Naive thymus-derived CD4-positive, alpha-beta T cell (primary cell): ENCODE measurements at regions of chr11 and their contacts with region 1.

Region 1: GRCh38 chr11:86447763-86448480 is 73.2 kb downstream of the CCDC81 start:
- DNase-seq: peak in 1 of 9 donors; percentile 46
- ATAC-seq: no peak
- H3K4me3 ChIP-seq: no peak overlapping the region
- H3K4me3 Mint-ChIP-seq: peak overlapping the region in 1 of 10 donors; percentile 43
- H3K27ac ChIP-seq: no peak overlapping the region
- H3K27ac Mint-ChIP-seq: peak overlapping the region in 1 of 9 donors; percentile 74
- H3K4me1 ChIP-seq: peaks cover 0 to 2% of the 10 kb centered on the region in 2 donors
- H3K4me1 Mint-ChIP-seq: peaks cover 0 to 16% (median 0%) of the 10 kb centered on the region in 7 donors
- H3K27me3 ChIP-seq: no peaks in the 10 kb centered on the region
- H3K27me3 Mint-ChIP-seq: no peaks in the 10 kb centered on the region

Region 2: DNA sequence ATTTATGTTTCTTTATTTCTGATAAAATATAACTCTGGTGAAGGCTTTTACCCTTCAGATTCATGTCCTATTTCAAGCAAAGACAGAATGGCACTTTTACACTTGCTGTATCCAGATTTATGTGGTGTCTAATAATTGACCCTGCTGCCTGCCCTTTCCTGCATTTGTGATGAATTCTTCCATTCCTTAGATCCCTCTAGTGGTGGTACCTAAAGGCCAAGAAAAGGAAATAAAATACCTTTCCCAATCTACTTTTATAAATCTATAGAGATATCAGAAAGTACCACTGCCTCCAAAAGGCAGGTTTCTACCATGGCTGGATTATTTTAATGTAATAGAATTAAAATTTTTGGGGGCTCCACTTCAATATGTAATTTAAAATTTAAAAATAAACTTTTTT is 39.1 kb before region 1 on chr11:
- CTCF ChIA-PET with region 1: no interaction called
- POLR2A ChIA-PET with region 1: no interaction called
- intact Hi-C with region 1: no loop called
- DNase-seq: no peak
- ATAC-seq: no peak
- H3K4me3 ChIP-seq: no peak overlapping the region
- H3K4me3 Mint-ChIP-seq: no peak overlapping the region
- H3K27ac ChIP-seq: no peak overlapping the region
- H3K27ac Mint-ChIP-seq: no peak overlapping the region
- H3K4me1 ChIP-seq: no peaks in the 10 kb centered on the region
- H3K4me1 Mint-ChIP-seq: no peaks in the 10 kb centered on the region
- H3K27me3 ChIP-seq: no peaks in the 10 kb centered on the region
- H3K27me3 Mint-ChIP-seq: no peaks in the 10 kb centered on the region

Region 3: GRCh38 chr11:86592659-86593451 is 144.9 kb after region 1 on chr11:
- CTCF ChIA-PET with region 1: no interaction called
- POLR2A ChIA-PET with region 1: no interaction called
- intact Hi-C with region 1: loop called in 1 of 2 experiments (anchors 1 kb)
- DNase-seq: peak in 7 of 9 donors; percentile 25 to 77 (median 37)
- ATAC-seq: peak; percentile 78
- H3K4me3 ChIP-seq: no peak overlapping the region
- H3K4me3 Mint-ChIP-seq: peak overlapping the region in 3 of 10 donors; percentile 10 to 35 (median 23)
- H3K27ac ChIP-seq: no peak overlapping the region
- H3K27ac Mint-ChIP-seq: peak overlapping the region in 2 of 9 donors; percentile 32 to 58
- H3K4me1 ChIP-seq: peaks cover 0 to 7% of the 10 kb centered on the region in 2 donors
- H3K4me1 Mint-ChIP-seq: peaks cover 7 to 21% (median 14%) of the 10 kb centered on the region in 7 donors
- H3K27me3 ChIP-seq: no peaks in the 10 kb centered on the region
- H3K27me3 Mint-ChIP-seq: no peaks in the 10 kb centered on the region